AG04450 (cell line): ENCODE measurements at regions of chr3 and their contacts with region 1.

Region 1: GRCh38 chr3:187112934-187113793 is 26.1 kb downstream of the RPL39L start:
- DNase-seq: no peak
- H3K4me3 ChIP-seq: no peak overlapping the region
- H3K27ac ChIP-seq: no peak overlapping the region
- H3K27me3 ChIP-seq: no peaks in the 10 kb centered on the region
- CTCF ChIP-seq: peak; percentile 61

Region 2: DNA sequence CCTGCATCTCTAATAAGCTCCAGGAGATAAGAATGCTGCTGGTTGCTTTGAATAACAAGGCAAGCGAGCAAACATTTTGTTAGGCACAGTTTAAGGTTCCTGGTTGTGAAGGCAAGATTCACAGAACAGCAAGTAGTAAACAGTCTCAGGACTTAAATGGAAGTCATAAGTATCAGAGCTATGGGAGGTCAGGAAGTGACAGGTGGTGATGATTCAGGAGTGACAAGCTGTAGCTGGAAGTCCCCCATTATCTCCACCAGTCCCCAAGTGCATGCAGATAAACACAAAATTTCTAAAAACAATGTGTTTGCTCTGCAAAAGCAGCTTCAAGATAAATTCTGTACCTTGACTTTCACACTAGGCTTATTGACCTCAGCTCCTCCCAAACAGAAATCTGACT is 469.7 kb before region 1 on chr3:
- CTCF ChIA-PET with region 1: no interaction called
- POLR2A ChIA-PET with region 1: no interaction called
- DNase-seq: no peak
- H3K4me3 ChIP-seq: no peak overlapping the region
- H3K27ac ChIP-seq: no peak overlapping the region
- H3K27me3 ChIP-seq: peaks cover 11% of the 10 kb centered on the region
- CTCF ChIP-seq: no peak

Region 3: DNA sequence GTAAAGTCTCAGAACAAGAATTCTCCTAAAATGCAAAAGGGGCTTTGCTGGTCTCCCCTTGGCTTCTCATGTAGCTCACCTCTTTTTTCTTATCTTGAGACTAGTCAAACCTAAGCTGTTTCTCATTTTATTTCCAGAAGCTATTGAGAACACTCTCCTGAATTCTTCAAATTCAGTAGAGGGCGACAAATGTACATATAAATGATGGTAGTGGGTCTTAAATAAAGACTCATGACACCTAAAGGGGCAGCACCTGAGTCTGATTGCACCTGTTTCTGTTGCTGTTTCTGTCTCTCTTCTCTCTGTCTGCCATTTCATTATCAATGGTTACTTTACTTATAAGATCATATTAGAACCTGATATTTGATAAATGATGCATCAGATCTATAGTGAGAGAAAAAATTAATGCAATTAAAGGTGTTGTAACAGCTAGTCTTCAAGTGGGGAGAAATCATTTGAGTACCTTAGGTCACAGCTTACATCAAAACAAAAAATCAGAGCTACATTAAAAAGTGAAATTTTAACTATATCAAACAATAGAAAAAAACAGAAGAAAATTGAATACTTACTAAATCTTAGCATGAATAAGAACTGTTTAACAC is 263.7 kb before region 1 on chr3:
- CTCF ChIA-PET with region 1: interaction called, 16 read pairs
- POLR2A ChIA-PET with region 1: no interaction called
- DNase-seq: no peak
- H3K4me3 ChIP-seq: no peak overlapping the region
- H3K27ac ChIP-seq: no peak overlapping the region
- H3K27me3 ChIP-seq: peaks cover 27% of the 10 kb centered on the region
- CTCF ChIP-seq: peak; percentile 51

Region 4: GRCh38 chr3:187101184-187102072 is 11.7 kb before region 1 on chr3:
- CTCF ChIA-PET with region 1: interaction called, 78 read pairs
- POLR2A ChIA-PET with region 1: no interaction called
- DNase-seq: peak; percentile 39
- H3K4me3 ChIP-seq: peak overlapping the region; percentile 48
- H3K27ac ChIP-seq: peak overlapping the region; percentile 69
- H3K27me3 ChIP-seq: no peaks in the 10 kb centered on the region
- CTCF ChIP-seq: no peak

Region 5: DNA sequence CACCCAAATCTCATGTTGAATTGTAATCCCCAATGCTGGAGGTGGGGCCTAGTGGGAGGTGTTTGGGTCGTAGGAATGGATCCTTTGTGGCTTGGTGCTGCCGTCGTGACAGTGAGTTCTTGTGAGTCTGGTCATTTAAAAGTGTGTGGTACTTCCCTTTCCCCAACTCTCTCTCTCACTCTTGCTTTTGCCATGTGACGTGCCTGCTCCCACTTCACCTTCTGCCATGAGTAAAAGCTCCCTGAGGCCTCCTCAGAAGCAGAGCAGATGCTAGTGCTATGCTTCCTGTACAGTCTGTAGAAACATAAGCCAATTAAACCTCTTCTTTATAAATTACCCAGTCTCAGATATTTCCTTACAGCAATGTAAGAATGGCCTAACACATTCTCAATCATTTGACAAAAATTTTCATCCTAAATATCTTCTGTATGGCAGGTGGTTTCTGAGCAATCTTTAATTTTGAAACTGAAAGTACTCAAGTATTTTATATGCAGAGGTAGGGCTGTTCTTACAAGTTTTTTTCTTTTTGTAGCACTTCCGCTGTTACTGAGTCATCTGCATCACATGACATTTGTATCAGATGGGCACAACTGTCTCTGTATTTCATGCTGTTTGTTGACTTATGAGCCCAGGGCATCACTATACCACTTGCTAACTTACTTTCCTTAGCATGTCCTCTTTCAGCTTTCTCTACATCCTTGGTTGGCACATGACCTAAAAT is 17.3 kb after region 1 on chr3:
- CTCF ChIA-PET with region 1: interaction called, 30 read pairs
- POLR2A ChIA-PET with region 1: no interaction called
- DNase-seq: peak; percentile 10
- H3K4me3 ChIP-seq: no peak overlapping the region
- H3K27ac ChIP-seq: no peak overlapping the region
- H3K27me3 ChIP-seq: no peaks in the 10 kb centered on the region
- CTCF ChIP-seq: no peak

Region 6: GRCh38 chr3:187714404-187714979 is 601.3 kb after region 1 on chr3:
- CTCF ChIA-PET with region 1: interaction called, 16 read pairs
- POLR2A ChIA-PET with region 1: no interaction called
- DNase-seq: peak; percentile 37
- H3K4me3 ChIP-seq: no peak overlapping the region
- H3K27ac ChIP-seq: no peak overlapping the region
- H3K27me3 ChIP-seq: peaks cover 7% of the 10 kb centered on the region
- CTCF ChIP-seq: peak; percentile 98